ENCODE measurements at regions of chr6 and their contacts with region 1.

Region 1: GRCh38 chr6:29016559-29017427 is 11.7 kb upstream of the ZNF311 start:
- DNase-seq: peak; percentile 88
- H3K4me3 ChIP-seq: peak overlapping the region; percentile 40 to 65 (median 40)
- H3K27ac ChIP-seq: peak overlapping the region; percentile 11 to 72 (median 26)
- H3K4me1 ChIP-seq: peaks cover 0 to 10% (median 3%) of the 10 kb centered on the region in 4 donors
- H3K27me3 ChIP-seq: peaks cover 43% of the 10 kb centered on the region
- CTCF ChIP-seq: peak; percentile 79 to 89 (median 83)
- EP300 ChIP-seq: no peak
- POLR2A ChIP-seq: no peak

Region 2: GRCh38 chr6:28683944-28684538 is 332.8 kb before region 1 on chr6:
- in situ Hi-C with region 1: loop called (anchors 5 to 10 kb)
- intact Hi-C with region 1: loop called (anchors 5 kb)
- DNase-seq: peak; percentile 8
- H3K4me3 ChIP-seq: no peak overlapping the region
- H3K27ac ChIP-seq: no peak overlapping the region
- H3K4me1 ChIP-seq: no peaks in the 10 kb centered on the region
- H3K27me3 ChIP-seq: peaks cover 97% of the 10 kb centered on the region
- CTCF ChIP-seq: peak; percentile 27 to 50 (median 36)
- EP300 ChIP-seq: no peak
- POLR2A ChIP-seq: no peak

Region 3: DNA sequence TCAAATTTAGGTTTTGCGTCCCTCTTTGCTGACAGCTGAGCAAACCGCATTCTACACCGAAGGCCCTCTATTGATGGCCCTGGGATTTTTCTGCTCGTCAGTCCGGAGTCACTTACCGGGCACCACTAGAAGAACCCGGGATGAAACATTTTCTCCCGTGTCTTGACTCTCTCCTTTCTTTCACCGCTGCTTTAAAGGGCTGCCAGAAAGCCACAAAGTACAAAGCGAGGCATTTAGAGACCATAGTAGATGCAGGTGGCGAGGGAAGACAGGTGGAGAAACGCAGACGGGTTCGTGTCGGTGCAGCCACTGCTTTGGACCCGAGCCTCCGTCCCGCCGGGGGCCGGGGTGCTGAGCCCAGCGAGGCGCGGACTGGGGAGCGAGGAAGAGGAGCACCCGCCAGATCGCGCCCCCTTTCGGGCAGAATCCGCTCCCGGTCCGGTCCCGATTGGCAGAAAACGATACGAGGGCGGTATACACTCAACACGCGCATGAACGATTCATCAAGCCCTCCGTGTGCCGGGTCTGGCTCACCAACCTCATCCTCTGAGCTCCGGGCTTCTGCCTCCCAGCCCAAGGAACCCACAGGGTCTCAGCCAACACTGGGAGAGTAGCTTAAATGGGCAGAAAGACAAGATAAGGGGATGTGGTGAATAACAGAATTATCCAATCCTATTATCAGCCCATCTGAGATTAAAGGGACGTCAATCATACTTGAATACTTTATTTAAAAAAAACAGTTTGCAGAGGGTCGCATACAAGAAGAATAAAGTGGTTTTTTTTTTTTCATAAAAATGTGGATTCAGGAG is 178.0 kb before region 1 on chr6:
- in situ Hi-C with region 1: loop called (anchors 5 to 25 kb)
- intact Hi-C with region 1: loop called (anchors 2 kb)
- DNase-seq: peak; percentile 86
- H3K4me3 ChIP-seq: peak overlapping the region; percentile 29 to 60 (median 51)
- H3K27ac ChIP-seq: peak overlapping the region; percentile 71 to 79 (median 74)
- H3K4me1 ChIP-seq: peaks cover 0 to 21% (median 11%) of the 10 kb centered on the region in 4 donors
- H3K27me3 ChIP-seq: peaks cover 59% of the 10 kb centered on the region
- CTCF ChIP-seq: peak; percentile 44 to 55 (median 54)
- EP300 ChIP-seq: no peak
- POLR2A ChIP-seq: no peak

Region 4: GRCh38 chr6:29345380-29345779 is 328.6 kb after region 1 on chr6:
- in situ Hi-C with region 1: no loop called
- intact Hi-C with region 1: no loop called
- DNase-seq: no peak
- H3K4me3 ChIP-seq: no peak overlapping the region
- H3K27ac ChIP-seq: no peak overlapping the region
- H3K4me1 ChIP-seq: no peaks in the 10 kb centered on the region
- H3K27me3 ChIP-seq: no peaks in the 10 kb centered on the region
- CTCF ChIP-seq: no peak
- EP300 ChIP-seq: no peak
- POLR2A ChIP-seq: no peak

Measured in transverse colon (tissue), 4 donors.